ENCODE measurements at regions of chr1 and their contacts with region 1.

Region 1: DNA sequence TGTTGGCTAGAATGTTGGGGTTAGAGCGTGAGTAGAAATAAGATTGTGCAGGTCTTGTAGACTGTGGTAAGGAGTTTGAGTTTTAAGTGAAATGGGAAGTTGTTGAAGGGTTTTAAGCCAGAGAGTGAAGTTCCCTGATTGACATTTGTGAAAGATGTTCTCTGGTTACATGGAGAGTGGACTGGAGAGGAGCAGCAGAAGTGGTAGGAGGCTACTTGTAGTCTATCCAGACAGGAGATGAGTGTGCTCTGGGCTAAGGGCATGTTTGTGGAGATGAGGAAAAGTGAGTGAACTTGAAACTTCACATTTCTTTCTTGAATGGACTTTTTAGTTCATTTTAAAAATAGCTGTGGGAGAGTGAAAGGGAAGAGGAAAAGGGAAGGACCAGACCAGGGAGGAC is 37.0 kb downstream of the F3 start:
- DNase-seq: no peak
- ATAC-seq: no peak
- H3K4me3 Mint-ChIP-seq: no peak overlapping the region
- H3K27ac Mint-ChIP-seq: no peak overlapping the region
- H3K4me1 Mint-ChIP-seq: peaks cover 16% of the 10 kb centered on the region
- H3K27me3 Mint-ChIP-seq: no peaks in the 10 kb centered on the region

Region 2: GRCh38 chr1:94258873-94259331 is 245.7 kb before region 1 on chr1:
- CTCF ChIA-PET with region 1: no interaction called
- DNase-seq: no peak
- ATAC-seq: no peak
- H3K4me3 Mint-ChIP-seq: no peak overlapping the region
- H3K27ac Mint-ChIP-seq: no peak overlapping the region
- H3K4me1 Mint-ChIP-seq: no peaks in the 10 kb centered on the region
- H3K27me3 Mint-ChIP-seq: peaks cover 8% of the 10 kb centered on the region

Region 3: DNA sequence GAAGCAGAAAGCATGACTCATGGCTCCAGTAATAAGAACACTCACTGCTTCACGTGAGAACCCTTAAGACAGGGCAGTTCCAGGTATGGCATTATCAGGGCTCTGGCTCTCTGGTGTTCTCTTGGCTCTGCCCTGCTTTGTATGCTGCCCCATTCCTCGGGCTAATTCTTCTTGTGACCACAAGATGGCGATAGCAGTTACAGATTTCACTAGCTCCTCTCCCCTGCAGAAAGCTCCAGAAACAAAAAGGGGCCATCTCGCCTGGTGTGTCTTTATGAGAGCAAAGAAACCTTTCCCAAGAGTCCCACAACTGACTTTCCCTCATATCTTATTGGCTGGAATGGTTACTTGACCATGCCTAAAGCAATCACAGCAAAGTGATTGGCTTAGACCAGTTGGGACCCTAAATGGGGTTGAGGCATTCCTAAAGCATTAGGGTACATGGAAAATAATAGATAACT is 23.1 kb before region 1 on chr1:
- CTCF ChIA-PET with region 1: interaction called, 12 read pairs
- DNase-seq: peak; percentile 51
- ATAC-seq: peak; percentile 84
- H3K4me3 Mint-ChIP-seq: no peak overlapping the region
- H3K27ac Mint-ChIP-seq: no peak overlapping the region
- H3K4me1 Mint-ChIP-seq: peaks cover 3% of the 10 kb centered on the region
- H3K27me3 Mint-ChIP-seq: no peaks in the 10 kb centered on the region